Upper lobe of right lung (tissue), 1 donor: ENCODE measurements at regions of chr19 and their contacts with region 1.

Region 1: DNA sequence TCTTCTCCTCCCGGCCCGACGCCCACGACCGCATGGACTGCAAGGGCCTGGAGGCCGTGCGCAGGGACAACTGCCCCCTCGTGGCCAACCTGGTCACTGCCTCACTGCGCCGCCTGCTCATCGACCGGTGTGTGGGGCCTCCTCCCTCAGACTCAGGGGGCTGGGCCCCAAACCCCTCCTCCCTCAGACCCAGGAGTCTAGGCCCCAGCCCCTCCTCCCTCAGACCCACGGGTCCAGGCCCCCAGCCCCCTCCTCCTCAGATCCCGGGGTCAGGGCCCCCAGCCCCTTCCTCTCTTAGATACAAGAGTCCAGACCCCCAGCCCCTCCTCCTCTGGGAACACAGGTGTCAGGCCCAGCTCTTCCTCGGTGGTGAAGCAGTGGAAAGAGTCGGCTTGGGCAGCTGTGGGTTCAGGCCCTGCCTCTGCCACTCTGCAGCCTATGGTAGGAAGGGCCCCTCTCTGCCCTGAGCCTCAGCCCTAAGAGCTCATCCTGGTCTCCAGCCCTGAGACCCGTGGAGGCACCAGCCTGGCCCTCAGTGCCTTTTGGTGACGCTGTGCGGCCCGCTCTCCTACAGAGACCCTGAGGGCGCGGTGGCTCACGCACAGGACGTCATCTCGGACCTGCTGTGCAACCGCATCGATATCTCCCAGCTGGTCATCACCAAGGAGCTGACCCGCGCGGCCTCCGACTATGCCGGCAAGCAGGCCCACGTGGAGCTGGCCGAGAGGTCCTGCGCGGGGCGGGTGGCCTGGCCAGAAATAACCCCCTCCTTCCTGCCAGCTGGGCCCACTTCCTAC is 3.7 kb upstream of the SPIB start:
- DNase-seq: peak; percentile 92
- ATAC-seq: peak; percentile 91
- H3K4me3 ChIP-seq: no peak overlapping the region
- H3K27ac ChIP-seq: no peak overlapping the region
- H3K4me1 ChIP-seq: no peaks in the 10 kb centered on the region
- H3K27me3 ChIP-seq: peaks cover 22% of the 10 kb centered on the region
- CTCF ChIP-seq: peak; percentile 92

Region 2: DNA sequence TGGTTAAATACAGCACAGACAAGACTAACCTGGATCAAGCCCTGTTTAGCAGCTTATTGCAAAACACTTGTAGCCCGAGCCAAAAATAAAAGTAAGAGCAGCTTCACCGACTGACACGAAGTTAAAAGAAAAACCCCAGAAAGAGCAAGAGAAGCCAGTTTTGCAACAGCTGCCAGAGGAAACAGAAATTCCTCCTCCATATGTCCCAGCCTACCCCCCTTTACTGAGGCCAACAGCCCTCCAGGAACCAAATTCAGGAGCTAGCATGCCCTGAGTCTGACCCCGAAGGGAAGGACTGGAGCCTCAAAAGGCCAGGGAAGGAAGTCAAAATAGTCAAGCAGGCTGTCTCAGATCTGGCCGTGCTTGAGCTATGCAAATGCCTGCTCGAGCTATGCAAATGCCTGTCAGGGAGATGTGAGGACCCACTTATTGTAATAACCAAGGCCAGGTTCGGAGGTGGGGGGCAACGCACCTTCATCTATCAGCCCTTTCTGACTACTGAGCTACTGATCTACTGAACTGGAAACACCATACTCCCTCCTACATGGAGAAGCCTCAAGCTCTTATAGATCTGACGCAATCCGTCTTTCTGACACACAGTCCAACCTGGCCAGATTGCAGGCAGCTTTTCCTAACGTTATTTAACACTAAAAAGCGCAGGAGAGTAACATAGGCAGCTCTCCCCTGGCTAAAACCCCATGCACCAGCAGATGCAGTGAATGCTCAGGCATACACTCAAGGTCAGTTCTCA is 460.8 kb before region 1 on chr19:
- intact Hi-C with region 1: no loop called
- DNase-seq: no peak
- ATAC-seq: peak; percentile 54
- H3K4me3 ChIP-seq: no peak overlapping the region
- H3K27ac ChIP-seq: no peak overlapping the region
- H3K4me1 ChIP-seq: peaks cover 19% of the 10 kb centered on the region
- H3K27me3 ChIP-seq: no peaks in the 10 kb centered on the region
- CTCF ChIP-seq: no peak

Region 3: DNA sequence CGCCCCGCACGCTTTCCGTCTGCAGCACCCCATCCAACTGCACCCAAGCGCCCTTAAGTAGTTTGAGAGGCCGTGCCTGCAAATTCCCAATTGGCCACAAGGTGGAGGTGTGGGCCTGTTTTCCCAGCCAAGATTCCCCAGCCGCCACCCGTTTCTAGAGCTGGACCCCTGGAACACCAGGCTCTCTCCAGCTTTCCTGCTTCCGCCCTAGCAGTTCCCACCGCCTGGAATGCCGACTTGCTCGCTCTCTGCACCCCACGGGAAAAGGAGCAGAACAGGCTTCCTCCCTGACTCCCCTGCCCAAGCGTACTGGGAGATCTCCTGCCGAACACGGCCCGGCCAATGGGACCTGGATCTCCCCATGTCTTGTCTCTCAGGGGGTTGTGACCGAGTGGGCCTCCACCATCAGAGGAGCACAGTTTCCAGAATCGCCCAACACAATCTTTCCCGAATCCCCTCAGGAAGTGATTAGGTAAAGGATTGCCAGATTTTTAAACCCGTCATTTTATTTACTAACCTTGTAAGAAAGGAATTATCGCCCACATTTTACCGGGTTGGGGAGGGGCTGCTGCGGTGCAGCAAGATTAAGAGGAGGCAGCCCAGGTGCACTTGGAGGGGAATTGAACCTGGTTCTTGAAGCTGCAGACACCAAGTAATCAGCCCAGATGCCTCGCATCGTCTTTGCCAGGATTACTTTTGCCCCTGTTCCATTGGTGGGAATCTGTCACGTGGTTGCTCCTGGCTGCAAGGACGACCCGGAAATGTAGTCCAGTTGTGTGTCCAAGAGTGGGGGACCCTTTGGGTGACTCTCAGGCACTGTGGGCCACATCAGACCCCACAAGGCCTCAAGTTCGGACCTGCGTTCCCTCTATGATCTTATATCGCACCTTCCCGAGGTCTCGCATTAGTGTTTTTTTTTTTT is 46.2 kb before region 1 on chr19:
- intact Hi-C with region 1: loop called (anchors 5 kb)
- DNase-seq: peak; percentile 90
- ATAC-seq: peak; percentile 83
- H3K4me3 ChIP-seq: peak overlapping the region; percentile 66
- H3K27ac ChIP-seq: peak overlapping the region; percentile 74
- H3K4me1 ChIP-seq: no peaks in the 10 kb centered on the region
- H3K27me3 ChIP-seq: no peaks in the 10 kb centered on the region
- CTCF ChIP-seq: peak; percentile 85

Region 4: DNA sequence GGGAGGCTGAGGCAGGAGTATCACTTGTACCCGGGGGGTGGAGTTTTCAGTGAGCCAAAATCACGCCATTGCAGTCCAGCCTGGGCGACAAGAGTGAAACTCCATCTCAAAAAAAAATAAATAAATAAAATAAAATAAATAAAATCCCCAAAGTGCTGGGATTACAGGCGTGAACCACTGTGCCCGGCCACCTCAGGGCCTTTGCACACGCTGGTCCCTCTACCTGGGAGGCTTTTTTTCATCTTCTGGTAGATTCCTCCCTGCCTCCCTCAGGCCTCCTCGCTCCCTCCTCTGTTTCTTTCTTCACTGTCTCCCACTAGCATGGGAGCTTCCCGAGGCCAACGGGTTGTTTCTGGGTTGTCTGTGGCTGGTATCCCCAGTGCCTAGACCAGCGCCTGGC is 32.7 kb after region 1 on chr19:
- intact Hi-C with region 1: no loop called
- DNase-seq: no peak
- ATAC-seq: no peak
- H3K4me3 ChIP-seq: no peak overlapping the region
- H3K27ac ChIP-seq: no peak overlapping the region
- H3K4me1 ChIP-seq: no peaks in the 10 kb centered on the region
- H3K27me3 ChIP-seq: peaks cover 6% of the 10 kb centered on the region
- CTCF ChIP-seq: no peak